AG04449 (cell line): ENCODE measurements at regions of chr5 and their contacts with region 1.

Region 1: DNA sequence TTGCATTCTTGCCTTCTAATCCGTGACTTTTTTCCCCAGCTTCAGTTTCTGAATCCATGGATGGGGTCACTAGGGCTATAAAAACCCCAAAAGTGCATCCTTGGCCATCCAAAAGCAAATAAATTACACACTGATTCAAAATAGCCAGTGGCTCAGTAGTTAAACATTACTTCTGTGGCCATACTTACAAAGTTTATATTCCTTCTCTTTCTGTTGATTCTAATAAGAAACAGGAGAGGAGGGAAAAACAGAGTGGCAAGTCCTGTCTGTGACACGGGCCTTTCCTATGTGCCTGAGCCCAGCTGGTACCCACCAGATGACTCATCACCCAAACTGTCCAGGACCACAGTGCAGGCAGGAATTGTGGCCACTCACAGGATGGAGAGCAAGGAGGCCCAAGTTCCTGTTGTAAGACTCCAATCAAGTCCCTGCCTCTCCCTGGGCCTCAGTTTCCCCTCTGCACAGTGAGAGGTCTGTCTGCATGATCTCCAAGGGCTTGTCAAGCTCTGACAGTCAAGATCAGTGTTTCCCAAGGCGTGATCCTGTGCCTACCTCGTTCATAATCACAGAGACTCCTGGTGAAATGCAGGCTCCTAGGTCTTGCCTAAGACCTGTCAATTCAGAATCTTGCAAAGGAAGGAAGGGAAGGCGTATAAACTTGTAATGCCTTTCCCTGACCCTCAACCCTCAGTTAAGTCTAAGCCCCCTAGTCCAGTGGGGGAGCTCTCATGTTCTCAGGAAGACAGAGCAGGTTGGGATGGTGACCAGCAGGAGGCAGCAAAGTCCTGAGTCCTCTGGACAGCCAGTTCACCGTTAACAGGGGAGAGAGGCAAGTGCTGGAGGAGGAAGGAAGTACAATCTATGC is 29.5 kb downstream of the TNIP1 start:
- DNase-seq: no peak
- H3K4me3 ChIP-seq: no peak overlapping the region
- CTCF ChIP-seq: peak; percentile 85

Region 2: DNA sequence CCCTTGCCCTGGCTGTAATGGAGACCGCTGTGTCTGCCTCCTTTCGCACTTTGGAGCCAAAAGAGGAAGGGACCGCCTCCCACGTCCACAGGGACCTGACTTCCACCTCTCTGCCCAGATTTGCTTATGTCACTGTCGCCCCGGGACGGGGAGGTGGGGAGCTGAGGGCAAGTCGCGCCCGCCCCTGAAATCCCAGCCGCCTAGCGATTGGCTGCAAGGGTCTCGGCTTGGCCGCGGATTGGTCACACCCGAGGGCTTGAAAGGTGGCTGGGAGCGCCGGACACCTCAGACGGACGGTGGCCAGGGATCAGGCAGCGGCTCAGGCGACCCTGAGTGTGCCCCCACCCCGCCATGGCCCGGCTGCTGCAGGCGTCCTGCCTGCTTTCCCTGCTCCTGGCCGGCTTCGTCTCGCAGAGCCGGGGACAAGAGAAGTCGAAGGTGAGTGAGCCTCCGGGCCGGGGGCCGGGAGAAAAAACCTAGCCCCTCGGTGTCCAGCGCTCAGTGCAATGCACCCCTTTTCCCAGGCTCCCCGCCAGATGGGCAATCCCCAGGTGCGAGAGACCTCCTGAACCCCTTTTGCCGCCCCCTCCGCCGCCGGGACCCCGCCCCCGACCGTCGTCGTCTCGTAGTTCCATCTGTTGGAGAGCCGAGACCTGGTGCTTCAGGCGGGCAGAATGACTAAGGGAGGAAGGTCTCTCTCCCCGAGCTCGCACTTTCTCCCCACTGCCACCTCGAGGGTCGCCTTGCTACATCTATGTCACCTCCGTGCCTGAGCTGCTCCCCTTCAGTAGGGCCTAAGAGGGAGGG is 30.8 kb before region 1 on chr5 and contains the start of gene GPX3:
- CTCF ChIA-PET with region 1: interaction called, 229 read pairs
- POLR2A ChIA-PET with region 1: no interaction called
- DNase-seq: no peak
- H3K4me3 ChIP-seq: peak within 1 kb of the TSS; percentile 63
- CTCF ChIP-seq: no peak

Region 3: DNA sequence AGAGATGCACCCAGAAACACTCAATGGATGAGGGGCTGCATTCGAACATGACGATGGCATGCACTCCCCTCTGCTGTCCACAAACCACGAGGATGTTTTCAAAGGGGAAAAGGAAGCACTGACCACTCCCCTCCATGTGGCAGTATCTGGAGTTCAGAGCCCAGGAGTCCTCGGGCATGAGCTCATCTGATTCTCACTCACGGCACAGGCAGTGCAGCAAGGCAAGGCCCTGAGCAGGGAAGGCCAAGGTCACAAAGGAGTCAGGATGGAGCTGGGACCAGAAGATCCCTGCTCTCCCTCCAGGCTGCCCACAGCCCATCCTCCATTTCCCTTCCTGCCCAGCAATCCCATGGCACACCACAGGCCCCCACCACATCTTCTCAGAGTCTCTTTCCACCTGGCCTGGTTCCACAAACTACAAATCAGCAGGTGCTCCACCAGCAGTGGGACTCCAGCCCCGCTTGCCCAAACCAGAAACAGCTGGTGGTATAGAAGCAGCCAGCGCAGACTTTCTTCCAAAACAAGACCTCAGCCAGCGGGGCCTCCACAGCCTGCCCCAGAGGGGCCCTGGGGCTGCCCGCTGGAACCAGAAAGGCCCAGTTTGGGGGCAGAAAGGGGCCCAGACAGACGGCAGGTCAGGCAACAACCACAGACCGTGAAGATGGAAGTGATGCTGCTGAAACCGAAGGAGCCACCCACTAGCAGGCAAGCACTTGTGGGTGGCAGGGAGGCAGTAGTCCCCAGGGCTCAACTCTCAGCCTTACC is 17.3 kb after region 1 on chr5:
- CTCF ChIA-PET with region 1: interaction called, 317 read pairs
- POLR2A ChIA-PET with region 1: no interaction called
- DNase-seq: no peak
- H3K4me3 ChIP-seq: no peak overlapping the region
- CTCF ChIP-seq: no peak

Region 4: DNA sequence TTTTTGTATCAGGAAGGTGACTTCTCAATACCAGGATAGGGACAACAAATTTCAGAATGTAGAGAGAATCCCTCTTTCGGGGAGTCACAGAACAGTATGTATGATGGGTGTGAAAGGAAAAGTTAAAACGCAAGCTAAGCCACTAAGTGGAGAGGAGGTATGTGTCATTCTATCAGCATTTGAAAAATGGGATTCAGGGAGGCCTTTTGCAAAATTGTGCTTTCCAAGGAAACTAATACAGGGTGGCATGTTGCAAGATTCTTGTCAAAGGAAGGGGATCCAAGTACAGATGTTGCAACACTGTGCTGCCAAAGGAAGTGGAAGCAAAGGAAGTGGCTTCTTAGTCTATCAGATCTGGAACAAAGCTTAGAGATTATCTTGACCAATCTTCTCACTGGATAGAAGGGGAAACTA is 42.2 kb after region 1 on chr5:
- CTCF ChIA-PET with region 1: interaction called, 104 read pairs
- POLR2A ChIA-PET with region 1: interaction called, 5 read pairs
- DNase-seq: peak; percentile 91
- H3K4me3 ChIP-seq: no peak overlapping the region
- CTCF ChIP-seq: no peak

Region 5: GRCh38 chr5:151134238-151134637 is 82.9 kb after region 1 on chr5:
- CTCF ChIA-PET with region 1: interaction called, 13 read pairs
- POLR2A ChIA-PET with region 1: no interaction called
- DNase-seq: no peak
- H3K4me3 ChIP-seq: no peak overlapping the region
- CTCF ChIP-seq: no peak

Region 6: GRCh38 chr5:151150471-151151262 is 99.4 kb after region 1 on chr5:
- CTCF ChIA-PET with region 1: interaction called, 12 read pairs
- POLR2A ChIA-PET with region 1: no interaction called
- DNase-seq: no peak
- H3K4me3 ChIP-seq: no peak overlapping the region
- CTCF ChIP-seq: no peak

Region 7: DNA sequence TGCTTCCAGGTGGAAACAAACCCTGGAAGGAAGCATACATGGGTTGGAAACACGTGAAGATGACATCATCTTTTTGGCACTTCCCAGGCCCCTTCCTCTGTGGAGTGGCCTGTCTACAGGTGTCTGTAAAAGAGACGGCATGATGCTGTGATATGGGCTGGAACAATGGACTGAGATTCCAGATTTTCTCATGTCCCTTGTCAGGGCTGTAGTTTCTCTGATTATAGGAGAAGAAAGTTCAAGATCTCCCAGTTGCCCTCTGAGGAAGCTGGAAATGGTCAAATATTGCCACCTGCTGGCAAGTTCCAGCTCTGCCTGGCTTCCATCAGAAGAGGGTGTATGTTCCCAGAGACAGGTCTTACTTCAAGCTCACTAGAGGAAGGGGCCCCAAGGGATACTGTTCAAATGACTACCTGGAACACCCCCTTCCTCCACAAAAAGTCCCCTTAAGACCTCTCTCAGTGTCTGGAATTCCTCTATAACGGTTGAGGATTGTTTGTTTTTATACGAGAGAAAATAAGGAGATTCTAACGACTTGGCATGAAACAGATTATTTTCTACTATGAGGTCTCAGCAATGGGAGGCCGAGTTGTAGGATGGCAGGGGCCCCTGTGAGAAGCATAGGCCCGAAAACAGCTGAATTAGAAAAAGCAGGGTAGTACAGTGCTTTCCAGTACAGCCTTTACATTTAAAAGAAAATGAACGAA is 113.5 kb after region 1 on chr5:
- CTCF ChIA-PET with region 1: interaction called, 165 read pairs
- POLR2A ChIA-PET with region 1: no interaction called
- DNase-seq: no peak
- H3K4me3 ChIP-seq: no peak overlapping the region
- CTCF ChIP-seq: peak; percentile 87